IMR-90 (cell line): ENCODE measurements at regions of chr7 and their contacts with region 1.

Region 1: DNA sequence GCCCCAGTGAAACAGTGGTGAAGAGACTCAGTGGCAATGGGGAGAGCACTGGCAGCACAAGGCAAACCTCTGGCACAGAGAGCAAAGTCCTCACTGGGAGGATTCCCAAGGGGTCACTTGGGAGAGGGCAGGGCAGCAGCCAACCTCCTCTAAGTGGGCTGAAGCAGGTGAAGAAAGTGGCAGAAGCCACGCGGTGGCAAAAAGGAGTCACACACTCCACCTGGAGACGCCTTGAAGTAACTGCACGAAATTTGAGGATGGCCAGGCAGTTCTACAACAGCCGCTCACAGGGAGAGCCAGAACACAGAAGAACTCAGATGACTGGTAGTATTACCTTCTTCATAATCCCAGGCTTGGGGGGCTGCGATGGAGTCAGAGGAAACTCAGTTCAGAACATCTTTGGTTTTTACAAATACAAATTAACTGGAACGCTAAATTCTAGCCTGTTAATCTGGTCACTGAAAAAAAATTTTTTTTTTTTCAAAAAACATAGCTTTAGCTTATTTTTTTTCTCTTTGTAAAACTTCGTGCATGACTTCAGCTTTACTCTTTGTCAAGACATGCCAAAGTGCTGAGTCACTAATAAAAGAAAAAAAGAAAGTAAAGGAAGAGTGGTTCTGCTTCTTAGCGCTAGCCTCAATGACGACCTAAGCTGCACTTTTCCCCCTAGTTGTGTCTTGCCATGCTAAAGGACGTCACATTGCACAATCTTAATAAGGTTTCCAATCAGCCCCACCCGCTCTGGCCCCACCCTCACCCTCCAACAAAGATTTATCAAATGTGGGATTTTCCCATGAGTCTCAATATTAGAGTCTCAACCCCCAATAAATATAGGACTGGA is 435 bp upstream of the IL6 start:
- DNase-seq: peak; percentile 97
- ATAC-seq: peak; percentile 63
- H3K4me3 ChIP-seq: peak overlapping the region; percentile 69
- H3K27ac ChIP-seq: peak overlapping the region; percentile 97
- H3K4me1 ChIP-seq: peaks cover 23% of the 10 kb centered on the region
- H3K27me3 ChIP-seq: no peaks in the 10 kb centered on the region
- CTCF ChIP-seq: peak; percentile 73
- POLR2A ChIP-seq: no peak
- RAD21 ChIP-seq: peak; percentile 93

Region 2: DNA sequence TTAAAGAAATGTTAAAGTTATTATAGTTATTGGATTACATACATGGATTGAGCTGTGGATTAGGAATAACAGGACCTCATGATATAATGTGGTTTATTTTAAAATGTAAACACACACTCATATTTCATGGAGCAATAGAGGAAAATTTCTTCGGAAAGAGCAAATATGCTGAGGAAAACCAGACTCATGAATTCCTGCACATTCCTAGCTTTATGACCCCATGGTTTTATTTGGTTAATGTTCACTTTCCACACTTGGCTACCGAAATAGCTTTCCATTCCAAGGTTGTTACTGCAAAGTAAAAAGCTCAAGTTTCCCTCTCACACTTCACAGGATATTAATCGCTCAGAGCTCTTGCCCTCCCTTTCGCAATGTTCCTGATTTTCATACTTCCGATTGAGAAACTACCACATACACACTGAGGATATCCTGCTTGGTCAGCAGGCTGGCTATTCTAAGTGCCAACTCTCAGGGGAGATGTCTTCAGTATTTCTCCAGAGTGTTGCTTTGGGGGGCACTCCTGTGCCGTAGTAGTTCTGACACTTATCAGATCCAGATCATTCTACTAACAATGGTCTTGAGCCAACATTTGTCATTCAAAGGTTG is 149.1 kb before region 1 on chr7:
- CTCF ChIA-PET with region 1: interaction called, 6 read pairs
- POLR2A ChIA-PET with region 1: interaction called, 6 read pairs
- dilution Hi-C with region 1: no loop called
- in situ Hi-C with region 1: no loop called
- intact Hi-C with region 1: loop called (anchors 1 kb)
- DNase-seq: peak; percentile 98
- ATAC-seq: peak; percentile 88
- H3K4me3 ChIP-seq: no peak overlapping the region
- H3K27ac ChIP-seq: peak overlapping the region; percentile 85
- H3K4me1 ChIP-seq: peaks cover 9% of the 10 kb centered on the region
- H3K27me3 ChIP-seq: no peaks in the 10 kb centered on the region
- CTCF ChIP-seq: no peak
- POLR2A ChIP-seq: no peak
- RAD21 ChIP-seq: peak; percentile 11; the same call in 1 of the 2 replicates

Region 3: DNA sequence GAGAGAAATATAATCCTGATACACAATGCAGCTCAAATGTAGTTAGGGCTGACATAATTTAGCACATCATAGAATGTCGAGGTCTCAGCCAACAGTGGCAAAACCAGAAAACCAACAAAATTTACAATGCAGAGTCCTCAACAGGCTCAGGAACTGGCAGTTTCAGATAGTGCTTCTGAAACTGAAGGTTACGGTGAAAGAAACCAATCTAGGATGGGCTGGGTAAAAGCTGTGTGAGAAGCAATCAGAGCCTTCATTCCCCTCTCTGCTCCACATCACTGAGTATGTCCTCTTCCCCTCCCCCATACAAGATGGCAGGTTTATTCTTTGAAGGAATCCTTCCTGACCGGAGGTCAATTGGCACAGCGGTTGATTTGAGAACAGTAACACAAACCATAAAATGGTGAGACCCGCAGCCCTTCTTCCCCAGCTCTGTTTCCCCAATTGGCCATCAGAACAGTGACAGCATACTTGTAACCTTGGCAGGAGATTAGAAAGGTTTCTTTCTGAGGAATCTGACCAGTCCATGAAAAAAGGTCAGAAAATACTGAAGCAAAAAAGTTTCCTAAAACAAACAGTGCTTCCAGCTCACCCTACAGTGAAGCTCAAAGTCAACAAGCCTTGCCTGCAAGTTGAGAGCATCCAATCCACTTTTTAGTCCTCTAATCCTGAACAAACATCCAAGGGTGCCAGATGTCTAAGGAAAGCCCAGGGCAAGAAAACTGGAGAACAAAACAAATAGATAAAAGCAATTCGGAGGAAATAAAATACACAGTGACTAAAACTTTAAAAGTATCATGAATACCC is 53.5 kb before region 1 on chr7:
- CTCF ChIA-PET with region 1: interaction called, 18 read pairs
- POLR2A ChIA-PET with region 1: interaction called, 3 read pairs
- dilution Hi-C with region 1: no loop called
- in situ Hi-C with region 1: no loop called
- intact Hi-C with region 1: loop called (anchors 2 kb)
- DNase-seq: peak; percentile 46
- ATAC-seq: peak; percentile 22
- H3K4me3 ChIP-seq: no peak overlapping the region
- H3K27ac ChIP-seq: peak overlapping the region; percentile 28; the same call in 1 of the 2 replicates
- H3K4me1 ChIP-seq: peaks cover 26% of the 10 kb centered on the region
- H3K27me3 ChIP-seq: no peaks in the 10 kb centered on the region
- CTCF ChIP-seq: no peak
- POLR2A ChIP-seq: no peak
- RAD21 ChIP-seq: no peak

Region 4: GRCh38 chr7:22822486-22823141 is 96.0 kb after region 1 on chr7 and contains the start of gene TOMM7:
- CTCF ChIA-PET with region 1: interaction called, 3 read pairs
- POLR2A ChIA-PET with region 1: no interaction called
- dilution Hi-C with region 1: no loop called
- in situ Hi-C with region 1: no loop called
- intact Hi-C with region 1: loop called (anchors 1 kb)
- DNase-seq: peak; percentile 97
- ATAC-seq: peak; percentile 93
- H3K4me3 ChIP-seq: peak within 1 kb of the TSS; percentile 82
- H3K27ac ChIP-seq: peak within 1 kb of the TSS; percentile 88
- H3K4me1 ChIP-seq: peaks cover 5% of the 10 kb centered on the region
- H3K27me3 ChIP-seq: no peaks in the 10 kb centered on the region
- CTCF ChIP-seq: peak; percentile 53
- POLR2A ChIP-seq: peak; percentile 86
- RAD21 ChIP-seq: peak; percentile 52
- total RNA-seq, gene TOMM7: 67.2 and 125 TPM in 2 replicates

Region 5: GRCh38 chr7:22896917-22897316 is 170.4 kb after region 1 on chr7:
- CTCF ChIA-PET with region 1: no interaction called
- POLR2A ChIA-PET with region 1: no interaction called
- dilution Hi-C with region 1: no loop called
- in situ Hi-C with region 1: no loop called
- intact Hi-C with region 1: no loop called
- DNase-seq: no peak
- ATAC-seq: no peak
- H3K4me3 ChIP-seq: no peak overlapping the region
- H3K27ac ChIP-seq: no peak overlapping the region
- H3K4me1 ChIP-seq: peaks cover 5% of the 10 kb centered on the region
- H3K27me3 ChIP-seq: no peaks in the 10 kb centered on the region
- CTCF ChIP-seq: no peak
- POLR2A ChIP-seq: no peak
- RAD21 ChIP-seq: no peak

Region 6: GRCh38 chr7:22945584-22945983 is 219.0 kb after region 1 on chr7:
- CTCF ChIA-PET with region 1: no interaction called
- POLR2A ChIA-PET with region 1: no interaction called
- dilution Hi-C with region 1: no loop called
- in situ Hi-C with region 1: no loop called
- intact Hi-C with region 1: loop called (anchors 5 kb)
- DNase-seq: peak; percentile 63
- ATAC-seq: no peak
- H3K4me3 ChIP-seq: no peak overlapping the region
- H3K27ac ChIP-seq: no peak overlapping the region; the same call in 1 of the 2 replicates
- H3K4me1 ChIP-seq: peaks cover 6% of the 10 kb centered on the region; the same call in 1 of the 2 replicates
- H3K27me3 ChIP-seq: no peaks in the 10 kb centered on the region
- CTCF ChIP-seq: no peak
- POLR2A ChIP-seq: no peak
- RAD21 ChIP-seq: no peak

Region 7: DNA sequence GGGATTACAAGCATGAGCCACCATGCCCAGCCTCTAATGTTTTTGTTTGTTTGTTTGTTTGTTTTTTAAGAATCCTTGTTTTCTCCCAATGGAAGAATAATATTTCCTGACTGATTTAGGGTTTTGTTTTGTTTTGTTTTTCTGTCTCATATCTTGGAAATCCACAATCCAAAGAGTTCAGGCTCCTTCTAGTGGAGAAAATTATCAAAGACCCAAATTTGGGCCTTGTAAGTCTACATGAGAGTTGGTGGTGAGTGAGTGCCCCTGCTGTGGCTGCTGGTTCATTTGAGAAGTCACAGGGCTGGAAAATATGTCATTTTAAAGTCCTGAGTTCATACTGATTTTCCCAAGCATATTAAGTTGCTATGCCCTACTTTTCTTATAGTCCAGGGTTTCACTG is 345.5 kb after region 1 on chr7:
- CTCF ChIA-PET with region 1: no interaction called
- POLR2A ChIA-PET with region 1: no interaction called
- dilution Hi-C with region 1: no loop called
- in situ Hi-C with region 1: no loop called
- intact Hi-C with region 1: loop called (anchors 5 kb)
- DNase-seq: peak; percentile 28
- ATAC-seq: peak; percentile 55; the same call in 1 of the 2 replicates
- H3K4me3 ChIP-seq: no peak overlapping the region
- H3K27ac ChIP-seq: no peak overlapping the region
- H3K4me1 ChIP-seq: peaks cover 5% of the 10 kb centered on the region
- H3K27me3 ChIP-seq: no peaks in the 10 kb centered on the region
- CTCF ChIP-seq: peak; percentile 43
- POLR2A ChIP-seq: no peak
- RAD21 ChIP-seq: peak; percentile 39; the same call in 1 of the 2 replicates

Region 8: DNA sequence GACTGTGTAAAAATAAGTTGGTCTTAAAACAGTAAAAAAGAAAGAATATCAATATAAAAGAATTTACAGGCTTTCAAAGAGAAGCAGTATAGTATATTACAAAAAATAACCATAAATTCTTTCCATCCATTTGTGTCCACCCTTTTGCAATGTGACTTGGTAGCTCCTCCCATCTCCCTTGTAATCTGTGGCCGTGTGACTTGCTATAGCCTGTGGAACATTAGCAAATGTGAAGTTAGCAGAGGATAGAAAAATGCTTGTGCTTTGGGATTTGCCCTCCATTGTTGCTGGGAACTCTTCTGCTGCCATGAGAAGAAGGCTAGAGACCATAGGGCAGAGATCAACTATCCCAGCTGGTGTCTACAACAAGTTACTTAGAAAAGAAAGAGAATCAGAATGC is 409.2 kb after region 1 on chr7:
- CTCF ChIA-PET with region 1: no interaction called
- POLR2A ChIA-PET with region 1: no interaction called
- dilution Hi-C with region 1: no loop called
- in situ Hi-C with region 1: no loop called
- intact Hi-C with region 1: no loop called
- DNase-seq: peak; percentile 17
- ATAC-seq: peak; percentile 75
- H3K4me3 ChIP-seq: no peak overlapping the region
- H3K27ac ChIP-seq: peak overlapping the region; percentile 56; the same call in 1 of the 2 replicates
- H3K4me1 ChIP-seq: peaks cover 3% of the 10 kb centered on the region
- H3K27me3 ChIP-seq: no peaks in the 10 kb centered on the region
- CTCF ChIP-seq: no peak
- POLR2A ChIP-seq: no peak
- RAD21 ChIP-seq: no peak